Spleen (tissue), 13 donors: ENCODE measurements at regions of chr6 and their contacts with region 1.

Region 1: DNA sequence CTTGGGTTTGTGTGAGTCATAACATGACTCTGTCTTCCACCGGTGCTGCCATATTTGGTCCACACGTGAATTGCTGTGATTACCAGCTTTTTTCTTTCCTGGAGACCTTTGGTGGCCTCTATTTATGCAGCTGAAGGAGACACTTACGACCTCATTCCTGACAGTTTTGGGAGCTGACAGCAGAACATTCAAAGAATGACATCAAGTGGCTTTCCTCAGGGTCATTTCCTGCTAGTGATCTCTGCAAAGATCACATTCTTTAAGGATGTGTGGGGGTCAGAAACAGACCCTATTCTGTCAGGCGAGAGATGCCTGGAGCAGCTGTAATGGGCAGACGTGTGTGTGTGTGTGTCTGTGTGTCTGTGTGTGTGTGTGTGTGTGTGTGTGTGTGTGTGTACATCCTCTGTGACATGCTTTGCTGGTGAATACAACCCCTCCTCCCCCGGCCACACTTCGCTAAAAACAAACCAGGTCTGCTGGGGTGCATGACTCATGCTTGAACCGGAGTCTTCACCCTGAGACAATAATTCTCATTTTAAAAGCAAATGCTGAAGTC is 115.6 kb downstream of the TMEM170B start:
- DNase-seq: no peak
- H3K4me3 ChIP-seq: no peak overlapping the region
- H3K27ac ChIP-seq: peak overlapping the region in 3 of 8 donors; percentile 17 to 41 (median 23)
- H3K4me1 ChIP-seq: peaks cover 0 to 55% (median 24%) of the 10 kb centered on the region in 6 donors
- H3K27me3 ChIP-seq: peaks cover 0 to 16% (median 0%) of the 10 kb centered on the region in 7 donors
- CTCF ChIP-seq: no peak
- POLR2A ChIP-seq: no peak

Region 2: DNA sequence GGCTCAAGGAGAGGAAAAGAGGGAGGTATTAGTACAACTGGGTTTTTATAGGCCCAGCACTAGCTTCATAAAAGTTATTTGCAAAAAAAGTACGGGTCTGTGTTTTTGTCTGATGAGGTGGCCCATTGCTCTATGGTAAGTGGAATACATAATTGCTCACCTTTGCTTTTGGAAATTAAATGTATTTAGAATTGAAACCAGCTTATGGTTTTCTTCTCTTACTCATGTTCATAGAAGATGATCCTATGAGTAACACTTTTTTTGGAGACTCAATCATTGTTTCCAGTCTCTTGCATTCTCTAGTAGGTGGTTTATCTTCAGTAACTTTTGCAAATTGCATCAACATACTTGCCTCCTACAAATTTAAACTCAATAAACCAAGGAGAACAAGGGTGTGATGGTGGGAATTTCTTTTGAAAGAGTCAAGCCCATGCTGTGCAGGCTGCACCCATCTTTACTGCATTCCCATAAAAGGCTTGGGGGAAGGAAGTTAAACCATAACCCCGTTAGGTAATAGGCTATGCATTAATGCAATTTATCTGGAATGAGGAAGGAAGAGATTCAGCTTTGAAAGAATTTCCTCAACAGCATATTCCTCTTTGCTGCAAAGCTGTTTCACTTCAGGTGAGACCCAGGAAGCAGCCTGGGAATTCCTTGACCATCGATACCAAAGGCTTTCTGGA is 588.5 kb after region 1 on chr6:
- intact Hi-C with region 1: loop called (anchors 5 kb)
- DNase-seq: no peak
- H3K4me3 ChIP-seq: no peak overlapping the region
- H3K27ac ChIP-seq: peak overlapping the region in 1 of 8 donors; percentile 3
- H3K4me1 ChIP-seq: peaks cover 0 to 26% (median 1%) of the 10 kb centered on the region in 6 donors
- H3K27me3 ChIP-seq: no peaks in the 10 kb centered on the region
- CTCF ChIP-seq: no peak
- POLR2A ChIP-seq: no peak

Region 3: GRCh38 chr6:12890171-12890790 is 1237.2 kb after region 1 on chr6:
- intact Hi-C with region 1: loop called (anchors 10 kb)
- DNase-seq: no peak
- H3K4me3 ChIP-seq: no peak overlapping the region
- H3K27ac ChIP-seq: no peak overlapping the region
- H3K4me1 ChIP-seq: peaks cover 0 to 7% (median 0%) of the 10 kb centered on the region in 6 donors
- H3K27me3 ChIP-seq: peaks cover 0 to 9% (median 0%) of the 10 kb centered on the region in 7 donors
- CTCF ChIP-seq: peak in 6 of 11 experiments; percentile 22 to 67 (median 54)
- POLR2A ChIP-seq: no peak